ENCODE measurements at regions of chrX and their contacts with region 1.

Region 1: GRCh38 chrX:43958529-43958928 is 14.7 kb downstream of the NDP start:
- DNase-seq: no peak
- H3K4me3 ChIP-seq: no peak overlapping the region
- H3K27ac ChIP-seq: no peak overlapping the region
- H3K4me1 ChIP-seq: no peaks in the 10 kb centered on the region
- H3K27me3 ChIP-seq: no peaks in the 10 kb centered on the region
- CTCF ChIP-seq: peak; percentile 64 to 80

Region 2: GRCh38 chrX:44244008-44244407 is 285.5 kb after region 1 on chrX:
- intact Hi-C with region 1: loop called (anchors 10 kb)
- DNase-seq: no peak
- H3K4me3 ChIP-seq: no peak overlapping the region
- H3K27ac ChIP-seq: no peak overlapping the region
- H3K4me1 ChIP-seq: no peaks in the 10 kb centered on the region
- H3K27me3 ChIP-seq: no peaks in the 10 kb centered on the region
- CTCF ChIP-seq: peak; percentile 39 to 44

Region 3: GRCh38 chrX:45186643-45187026 is 1228.1 kb after region 1 on chrX:
- intact Hi-C with region 1: loop called (anchors 5 kb)
- DNase-seq: no peak
- H3K4me3 ChIP-seq: no peak overlapping the region
- H3K27ac ChIP-seq: no peak overlapping the region
- H3K4me1 ChIP-seq: peaks cover 0 to 5% (median 0%) of the 10 kb centered on the region in 4 donors
- H3K27me3 ChIP-seq: no peaks in the 10 kb centered on the region
- CTCF ChIP-seq: no peak

Region 4: GRCh38 chrX:45232139-45232538 is 1273.6 kb after region 1 on chrX:
- intact Hi-C with region 1: no loop called
- DNase-seq: no peak
- H3K4me3 ChIP-seq: no peak overlapping the region
- H3K27ac ChIP-seq: no peak overlapping the region
- H3K4me1 ChIP-seq: no peaks in the 10 kb centered on the region
- H3K27me3 ChIP-seq: no peaks in the 10 kb centered on the region
- CTCF ChIP-seq: no peak